BJ (cell line): ENCODE measurements at regions of chr4 and their contacts with region 1.

Region 1: GRCh38 chr4:25144870-25145481 is 15.3 kb downstream of the SEPSECS start:
- DNase-seq: no peak
- H3K4me3 ChIP-seq: no peak overlapping the region
- H3K27me3 ChIP-seq: no peaks in the 10 kb centered on the region
- CTCF ChIP-seq: peak; percentile 68

Region 2: DNA sequence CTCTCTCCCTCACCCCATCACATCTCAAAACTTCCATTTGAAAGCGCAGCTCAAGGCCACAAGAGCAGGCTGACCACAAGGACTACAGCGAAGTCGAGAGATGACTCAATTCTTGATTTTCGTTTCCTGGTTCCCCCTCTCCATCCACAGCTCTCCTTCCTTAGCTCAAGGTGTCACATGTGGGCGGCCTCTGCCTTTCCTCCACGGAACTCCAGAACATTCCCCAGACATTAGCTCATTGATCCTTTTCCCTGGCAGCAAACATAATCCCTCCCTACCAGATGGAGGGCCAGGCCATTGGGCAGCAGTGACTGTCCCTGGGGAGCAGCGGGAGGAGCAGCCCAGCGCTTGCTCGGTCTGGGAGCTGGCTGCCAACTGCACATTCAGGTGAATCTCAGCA is 288.4 kb before region 1 on chr4:
- CTCF ChIA-PET with region 1: no interaction called
- POLR2A ChIA-PET with region 1: no interaction called
- DNase-seq: no peak
- H3K4me3 ChIP-seq: no peak overlapping the region
- H3K27me3 ChIP-seq: no peaks in the 10 kb centered on the region
- CTCF ChIP-seq: no peak

Region 3: GRCh38 chr4:25128671-25129070 is 16.3 kb before region 1 on chr4:
- CTCF ChIA-PET with region 1: interaction called, 16 read pairs
- POLR2A ChIA-PET with region 1: no interaction called
- DNase-seq: no peak
- H3K4me3 ChIP-seq: no peak overlapping the region
- H3K27me3 ChIP-seq: no peaks in the 10 kb centered on the region
- CTCF ChIP-seq: no peak

Region 4: GRCh38 chr4:25159884-25160713 is 15.1 kb after region 1 on chr4 and contains the start of gene SEPSECS:
- CTCF ChIA-PET with region 1: interaction called, 11 read pairs
- POLR2A ChIA-PET with region 1: no interaction called
- DNase-seq: peak; percentile 92
- H3K4me3 ChIP-seq: peak within 1 kb of the TSS; percentile 77
- H3K27me3 ChIP-seq: no peaks in the 10 kb centered on the region
- CTCF ChIP-seq: no peak
- polyA plus RNA-seq, gene SEPSECS: 2.6 and 4.9 TPM in 2 replicates

Region 5: DNA sequence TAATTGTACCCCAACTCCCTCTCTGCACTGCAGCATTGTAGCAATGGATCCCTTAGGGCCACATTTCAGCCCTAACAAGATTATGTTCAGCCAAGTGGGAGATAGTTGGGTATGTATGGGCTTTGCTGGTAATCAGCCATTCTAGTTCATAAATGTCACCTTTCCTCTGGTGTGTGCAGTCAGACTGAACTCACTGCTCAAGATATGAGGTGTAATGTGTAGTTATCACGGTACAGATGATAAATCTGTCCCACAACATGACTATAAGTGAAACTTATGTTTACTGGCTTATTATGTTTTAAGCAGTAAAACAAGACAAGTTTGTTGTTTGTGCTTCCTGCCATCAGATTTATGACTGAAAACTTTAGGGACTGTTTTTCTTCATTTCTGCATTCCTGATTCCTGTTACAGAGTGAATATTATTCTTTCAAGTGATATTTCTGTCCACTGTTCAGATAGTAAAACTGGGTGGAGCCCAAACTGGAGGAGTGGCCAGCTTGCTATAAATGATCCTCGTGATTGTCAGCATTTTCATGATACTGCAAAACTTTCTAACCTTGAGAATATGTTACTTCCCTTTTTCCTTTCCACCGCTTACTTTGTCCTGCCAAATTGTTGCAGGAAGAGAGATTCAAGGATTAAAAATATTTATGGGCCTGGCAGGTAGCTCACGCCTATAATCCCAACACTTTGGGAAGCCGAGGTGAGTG is 277.0 kb after region 1 on chr4:
- CTCF ChIA-PET with region 1: no interaction called
- POLR2A ChIA-PET with region 1: no interaction called
- DNase-seq: no peak
- H3K4me3 ChIP-seq: no peak overlapping the region
- H3K27me3 ChIP-seq: no peaks in the 10 kb centered on the region
- CTCF ChIP-seq: no peak

Region 6: GRCh38 chr4:25509646-25510045 is 364.7 kb after region 1 on chr4:
- CTCF ChIA-PET with region 1: no interaction called
- POLR2A ChIA-PET with region 1: no interaction called
- DNase-seq: no peak
- H3K4me3 ChIP-seq: no peak overlapping the region
- H3K27me3 ChIP-seq: no peaks in the 10 kb centered on the region
- CTCF ChIP-seq: no peak